Activated naive CD4-positive, alpha-beta T cell treated with anti-CD3 and anti-CD28 coated beads for 36 hours (primary cell): ENCODE measurements at regions of chr2 and their contacts with region 1.

Region 1: GRCh38 chr2:234425619-234426603 is 71.0 kb downstream of the ARL4C start:
- DNase-seq: peak; percentile 77
- H3K4me3 Mint-ChIP-seq: peak overlapping the region; percentile 72
- H3K27ac Mint-ChIP-seq: peak overlapping the region; percentile 88
- H3K4me1 Mint-ChIP-seq: peaks cover 77% of the 10 kb centered on the region
- H3K27me3 Mint-ChIP-seq: no peaks in the 10 kb centered on the region

Region 2: DNA sequence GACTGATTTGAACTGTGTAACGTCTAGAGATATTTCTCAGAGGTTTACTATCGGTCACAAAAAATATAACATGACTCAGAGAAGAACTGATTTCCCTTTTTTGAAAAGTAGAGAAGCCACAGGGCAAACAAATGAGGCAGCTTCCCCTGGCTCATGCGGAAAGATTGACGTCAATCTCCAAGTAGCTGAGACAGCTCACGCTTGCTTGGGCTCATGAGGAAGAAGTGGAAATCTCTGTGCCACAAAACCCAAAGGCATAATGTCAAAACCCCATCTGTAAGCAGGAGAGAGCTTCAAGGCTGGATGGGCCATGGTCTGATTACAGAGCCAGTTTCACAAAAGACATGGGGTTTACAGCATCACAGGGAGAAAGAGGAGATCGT is 117.1 kb before region 1 on chr2:
- CTCF ChIA-PET with region 1: no interaction called
- intact Hi-C with region 1: loop called (anchors 1 kb)
- DNase-seq: peak; percentile 89
- H3K4me3 Mint-ChIP-seq: peak overlapping the region; percentile 53
- H3K27ac Mint-ChIP-seq: peak overlapping the region; percentile 99
- H3K4me1 Mint-ChIP-seq: peaks cover 50% of the 10 kb centered on the region
- H3K27me3 Mint-ChIP-seq: no peaks in the 10 kb centered on the region

Region 3: GRCh38 chr2:234437642-234438304 is 11.9 kb after region 1 on chr2:
- CTCF ChIA-PET with region 1: interaction called, 5 read pairs
- intact Hi-C with region 1: loop called (anchors 1 kb)
- DNase-seq: no peak
- H3K4me3 Mint-ChIP-seq: no peak overlapping the region
- H3K27ac Mint-ChIP-seq: no peak overlapping the region
- H3K4me1 Mint-ChIP-seq: peaks cover 63% of the 10 kb centered on the region
- H3K27me3 Mint-ChIP-seq: no peaks in the 10 kb centered on the region

Region 4: GRCh38 chr2:234451852-234452625 is 26.1 kb after region 1 on chr2:
- CTCF ChIA-PET with region 1: interaction called, 7 read pairs
- intact Hi-C with region 1: loop called (anchors 1 kb)
- DNase-seq: no peak
- H3K4me3 Mint-ChIP-seq: peak overlapping the region; percentile 78
- H3K27ac Mint-ChIP-seq: peak overlapping the region; percentile 96
- H3K4me1 Mint-ChIP-seq: peaks cover 73% of the 10 kb centered on the region
- H3K27me3 Mint-ChIP-seq: no peaks in the 10 kb centered on the region

Region 5: DNA sequence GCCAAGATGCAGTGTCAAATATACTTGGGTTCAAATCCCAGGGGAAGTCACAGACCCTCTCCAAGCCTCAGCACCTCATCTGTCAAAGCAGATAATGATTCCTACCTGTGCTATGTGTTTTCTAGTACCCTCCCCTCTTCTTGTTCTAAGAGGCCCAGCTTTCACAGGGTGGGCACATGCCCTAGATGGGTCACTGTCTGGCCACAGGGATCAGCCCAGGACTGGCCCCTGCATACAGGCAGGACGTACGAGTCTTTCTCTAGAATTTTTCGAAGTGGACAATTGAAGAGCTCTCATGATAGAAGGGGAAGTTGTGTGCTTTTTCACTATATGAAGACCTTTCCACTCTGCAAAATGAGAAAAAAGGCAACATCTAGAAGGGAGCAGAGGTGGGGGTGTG is 48.7 kb after region 1 on chr2:
- CTCF ChIA-PET with region 1: no interaction called
- intact Hi-C with region 1: loop called (anchors 1 kb)
- DNase-seq: no peak
- H3K4me3 Mint-ChIP-seq: no peak overlapping the region
- H3K27ac Mint-ChIP-seq: peak overlapping the region; percentile 83
- H3K4me1 Mint-ChIP-seq: peaks cover 45% of the 10 kb centered on the region
- H3K27me3 Mint-ChIP-seq: no peaks in the 10 kb centered on the region

Region 6: DNA sequence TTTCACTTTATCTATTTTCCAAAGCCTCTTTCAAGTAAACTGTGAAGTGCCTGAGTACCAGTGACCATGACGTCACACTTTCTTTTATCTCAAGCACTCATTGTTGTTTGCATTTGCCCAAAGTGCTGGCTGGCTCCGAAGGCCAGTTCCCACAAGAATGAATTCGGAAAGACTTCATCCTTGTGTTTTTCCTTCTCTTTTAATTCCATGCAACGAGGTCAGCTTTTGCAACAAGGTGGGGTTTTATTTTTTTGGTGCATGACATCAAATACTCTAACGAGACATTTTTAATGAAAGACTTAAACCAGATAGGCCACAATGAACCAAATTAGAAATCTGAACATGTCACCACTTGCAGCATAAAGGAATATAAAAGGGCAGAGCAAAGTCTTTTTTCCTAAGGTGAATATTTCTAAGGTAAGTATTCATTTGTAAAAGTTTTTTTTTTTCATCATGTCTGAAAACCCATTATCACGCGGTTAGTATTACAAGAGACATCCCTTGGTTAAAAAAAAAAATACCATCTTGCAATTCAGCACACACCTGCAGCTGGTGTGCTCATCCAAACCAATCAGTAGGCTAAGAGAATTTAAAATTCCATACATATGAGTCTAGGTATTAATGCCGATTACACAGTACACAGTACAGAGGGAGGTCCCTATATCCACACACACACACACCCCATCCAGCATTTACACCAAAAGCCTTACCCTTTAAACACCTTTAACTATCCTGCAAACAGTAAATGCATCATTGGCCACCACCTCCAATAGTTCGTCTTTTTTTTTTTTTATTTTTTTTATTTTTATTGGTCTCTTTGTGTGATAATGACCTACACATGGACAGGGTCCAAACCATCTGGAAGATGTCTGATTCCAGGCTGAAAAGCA is 68.7 kb after region 1 on chr2:
- CTCF ChIA-PET with region 1: interaction called, 4 read pairs
- intact Hi-C with region 1: loop called (anchors 1 kb)
- DNase-seq: no peak
- H3K4me3 Mint-ChIP-seq: peak overlapping the region; percentile 90
- H3K27ac Mint-ChIP-seq: peak overlapping the region; percentile 89
- H3K4me1 Mint-ChIP-seq: peaks cover 48% of the 10 kb centered on the region
- H3K27me3 Mint-ChIP-seq: no peaks in the 10 kb centered on the region